Naive thymus-derived CD4-positive, alpha-beta T cell (primary cell): ENCODE measurements at regions of chrX and their contacts with region 1.

Region 1: DNA sequence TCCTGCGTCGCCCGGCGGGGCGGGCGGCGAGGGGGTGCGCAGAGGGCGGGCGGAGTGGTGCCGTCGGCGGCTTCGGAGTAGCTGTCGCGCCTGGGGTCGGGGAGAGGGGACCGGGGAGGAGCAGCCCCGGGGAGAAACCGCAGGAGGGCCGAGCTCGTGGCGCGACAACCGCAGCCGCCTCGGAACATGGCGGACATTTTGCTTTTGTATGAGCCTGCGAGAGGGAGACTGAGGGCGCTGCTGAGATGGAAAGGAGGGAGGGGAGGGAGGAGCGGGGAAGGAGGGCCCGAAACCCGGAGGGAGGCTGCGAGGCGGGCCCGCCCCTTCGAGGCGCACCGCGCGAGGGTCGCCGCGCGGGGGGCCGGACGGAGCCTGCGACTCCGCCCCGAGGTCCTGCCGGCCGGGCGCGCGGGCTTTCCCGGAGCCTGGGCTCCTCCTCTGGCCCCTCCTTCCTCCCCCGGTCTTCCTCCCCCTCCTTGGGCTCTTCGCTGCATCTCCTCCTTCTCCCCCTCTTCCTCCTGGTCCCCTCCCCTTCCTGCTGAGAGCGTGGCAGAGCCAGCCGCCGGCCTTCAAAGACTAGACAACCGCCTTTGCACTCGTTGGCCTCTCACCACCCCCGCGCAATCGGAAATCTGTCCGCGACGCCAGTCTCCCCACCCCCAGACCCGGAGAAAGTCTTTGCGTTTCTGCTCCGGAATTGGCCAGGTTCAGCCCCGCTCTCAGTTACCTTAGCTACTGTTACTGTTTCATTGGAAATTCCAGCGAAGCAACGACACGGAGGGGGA is 1.1 kb downstream of the INTS6L start:
- DNase-seq: peak; percentile 45 to 90 (median 83)
- ATAC-seq: peak; percentile 83
- H3K4me3 ChIP-seq: peak overlapping the region; percentile 62
- H3K4me3 Mint-ChIP-seq: peak overlapping the region; percentile 92 to 100 (median 98)
- H3K27ac ChIP-seq: peak overlapping the region; percentile 90
- H3K27ac Mint-ChIP-seq: peak overlapping the region; percentile 95 to 100 (median 97)
- H3K4me1 ChIP-seq: peaks cover 5 to 12% of the 10 kb centered on the region in 2 donors
- H3K4me1 Mint-ChIP-seq: peaks cover 8 to 49% (median 41%) of the 10 kb centered on the region in 7 donors
- H3K27me3 ChIP-seq: no peaks in the 10 kb centered on the region
- H3K27me3 Mint-ChIP-seq: peaks cover 0 to 3% (median 0%) of the 10 kb centered on the region in 5 donors

Region 2: GRCh38 chrX:134807039-134807731 is 714.4 kb before region 1 on chrX:
- CTCF ChIA-PET with region 1: no interaction called
- POLR2A ChIA-PET with region 1: no interaction called
- intact Hi-C with region 1: loop called in 1 of 2 experiments (anchors 10 kb)
- DNase-seq: peak; percentile 56 to 91 (median 85)
- ATAC-seq: peak; percentile 93
- H3K4me3 ChIP-seq: peak overlapping the region; percentile 79
- H3K4me3 Mint-ChIP-seq: peak overlapping the region; percentile 89 to 99 (median 95)
- H3K27ac ChIP-seq: peak overlapping the region; percentile 94
- H3K27ac Mint-ChIP-seq: peak overlapping the region; percentile 87 to 100 (median 97)
- H3K4me1 ChIP-seq: peaks cover 4% of the 10 kb centered on the region in 2 donors
- H3K4me1 Mint-ChIP-seq: peaks cover 8 to 39% (median 27%) of the 10 kb centered on the region in 7 donors
- H3K27me3 ChIP-seq: no peaks in the 10 kb centered on the region
- H3K27me3 Mint-ChIP-seq: peaks cover 0 to 2% (median 0%) of the 10 kb centered on the region in 5 donors

Region 3: DNA sequence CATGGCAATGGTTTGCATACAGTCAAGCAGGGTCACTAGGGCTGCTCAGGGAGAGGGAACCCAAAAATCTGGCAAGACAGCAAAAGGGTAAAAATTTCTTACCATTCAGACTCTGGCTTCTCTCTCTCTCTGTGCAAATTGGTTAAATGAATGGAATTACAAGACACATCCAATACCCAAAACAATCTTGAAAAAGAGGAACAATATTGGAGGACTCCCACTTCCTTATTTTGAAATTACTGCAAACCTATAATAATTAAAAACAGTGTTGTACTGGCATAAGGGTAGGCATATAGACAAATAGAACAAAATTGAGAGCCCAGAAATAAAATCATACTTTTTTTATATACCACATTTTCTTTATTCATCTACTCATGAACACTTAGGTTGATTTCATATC is 245.6 kb before region 1 on chrX:
- CTCF ChIA-PET with region 1: no interaction called
- POLR2A ChIA-PET with region 1: no interaction called
- intact Hi-C with region 1: no loop called
- DNase-seq: no peak
- ATAC-seq: no peak
- H3K4me3 ChIP-seq: no peak overlapping the region
- H3K4me3 Mint-ChIP-seq: no peak overlapping the region
- H3K27ac ChIP-seq: no peak overlapping the region
- H3K27ac Mint-ChIP-seq: no peak overlapping the region
- H3K4me1 ChIP-seq: no peaks in the 10 kb centered on the region
- H3K4me1 Mint-ChIP-seq: peaks cover 0 to 4% (median 0%) of the 10 kb centered on the region in 7 donors
- H3K27me3 ChIP-seq: no peaks in the 10 kb centered on the region
- H3K27me3 Mint-ChIP-seq: no peaks in the 10 kb centered on the region

Region 4: GRCh38 chrX:135384161-135384836 is 137.3 kb before region 1 on chrX:
- CTCF ChIA-PET with region 1: no interaction called
- POLR2A ChIA-PET with region 1: no interaction called
- intact Hi-C with region 1: loop called in 1 of 2 experiments (anchors 2 kb)
- DNase-seq: peak in 8 of 9 donors; percentile 35 to 70 (median 56)
- ATAC-seq: peak; percentile 97
- H3K4me3 ChIP-seq: peak overlapping the region; percentile 35
- H3K4me3 Mint-ChIP-seq: peak overlapping the region; percentile 46 to 78 (median 64)
- H3K27ac ChIP-seq: no peak overlapping the region
- H3K27ac Mint-ChIP-seq: peak overlapping the region; percentile 17 to 92 (median 72)
- H3K4me1 ChIP-seq: peaks cover 30 to 40% of the 10 kb centered on the region in 2 donors
- H3K4me1 Mint-ChIP-seq: peaks cover 17 to 50% (median 44%) of the 10 kb centered on the region in 7 donors
- H3K27me3 ChIP-seq: no peaks in the 10 kb centered on the region
- H3K27me3 Mint-ChIP-seq: no peaks in the 10 kb centered on the region

Region 5: GRCh38 chrX:135531813-135532212 is 10.2 kb after region 1 on chrX:
- CTCF ChIA-PET with region 1: interaction called, 3 read pairs
- POLR2A ChIA-PET with region 1: interaction called, 15 read pairs
- intact Hi-C with region 1: loop called in 1 of 2 experiments (anchors 1 kb)
- DNase-seq: no peak
- ATAC-seq: no peak
- H3K4me3 ChIP-seq: no peak overlapping the region
- H3K4me3 Mint-ChIP-seq: no peak overlapping the region
- H3K27ac ChIP-seq: no peak overlapping the region
- H3K27ac Mint-ChIP-seq: peak overlapping the region in 5 of 9 donors; percentile 6 to 83 (median 14)
- H3K4me1 ChIP-seq: peaks cover 2 to 12% of the 10 kb centered on the region in 2 donors
- H3K4me1 Mint-ChIP-seq: peaks cover 23 to 86% (median 72%) of the 10 kb centered on the region in 7 donors
- H3K27me3 ChIP-seq: no peaks in the 10 kb centered on the region
- H3K27me3 Mint-ChIP-seq: no peaks in the 10 kb centered on the region

Region 6: DNA sequence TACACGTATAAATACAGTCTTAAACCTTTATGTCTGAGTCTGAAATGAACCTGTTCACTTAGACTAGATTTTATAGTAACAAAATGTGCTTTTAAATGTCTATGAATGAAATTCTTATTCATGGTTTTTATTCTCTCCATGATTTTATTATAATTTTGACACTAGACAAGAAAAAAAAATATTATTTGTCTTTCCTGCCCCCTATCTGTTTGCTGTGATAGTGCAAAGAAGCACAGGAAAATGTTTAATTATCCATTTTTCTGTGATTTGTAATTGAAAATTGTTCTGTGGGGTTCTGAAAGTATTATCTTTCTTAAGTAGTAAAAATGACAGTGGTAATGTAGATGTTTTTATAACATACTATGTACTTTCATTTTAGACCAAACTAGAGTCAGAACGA is 50.8 kb after region 1 on chrX:
- CTCF ChIA-PET with region 1: no interaction called
- POLR2A ChIA-PET with region 1: interaction called, 3 read pairs
- intact Hi-C with region 1: loop called (anchors 2 kb)
- DNase-seq: peak in 4 of 9 donors; percentile 5 to 12 (median 10)
- ATAC-seq: no peak
- H3K4me3 ChIP-seq: no peak overlapping the region
- H3K4me3 Mint-ChIP-seq: no peak overlapping the region
- H3K27ac ChIP-seq: no peak overlapping the region
- H3K27ac Mint-ChIP-seq: no peak overlapping the region
- H3K4me1 ChIP-seq: no peaks in the 10 kb centered on the region
- H3K4me1 Mint-ChIP-seq: peaks cover 0 to 4% (median 0%) of the 10 kb centered on the region in 7 donors
- H3K27me3 ChIP-seq: no peaks in the 10 kb centered on the region
- H3K27me3 Mint-ChIP-seq: no peaks in the 10 kb centered on the region

Region 7: GRCh38 chrX:136147315-136147901 is 625.8 kb after region 1 on chrX and contains the start of gene FHL1:
- CTCF ChIA-PET with region 1: no interaction called
- POLR2A ChIA-PET with region 1: interaction called, 3 read pairs
- intact Hi-C with region 1: loop called in 1 of 2 experiments (anchors 10 kb)
- DNase-seq: peak; percentile 12 to 59 (median 45)
- ATAC-seq: peak; percentile 86
- H3K4me3 ChIP-seq: peak within 1 kb of the TSS; percentile 55
- H3K4me3 Mint-ChIP-seq: peak within 1 kb of the TSS; percentile 82 to 94 (median 89)
- H3K27ac ChIP-seq: peak within 1 kb of the TSS; percentile 56
- H3K27ac Mint-ChIP-seq: peak within 1 kb of the TSS; percentile 73 to 97 (median 91)
- H3K4me1 ChIP-seq: peaks cover 0 to 17% of the 10 kb centered on the region in 2 donors
- H3K4me1 Mint-ChIP-seq: peaks cover 23 to 54% (median 41%) of the 10 kb centered on the region in 7 donors
- H3K27me3 ChIP-seq: no peaks in the 10 kb centered on the region
- H3K27me3 Mint-ChIP-seq: peaks cover 0 to 14% (median 0%) of the 10 kb centered on the region in 5 donors
- total RNA-seq, gene FHL1: 14.9 to 26.4 (median 22.4) TPM

Region 8: GRCh38 chrX:136275553-136275952 is 754.0 kb after region 1 on chrX:
- CTCF ChIA-PET with region 1: no interaction called
- POLR2A ChIA-PET with region 1: no interaction called
- intact Hi-C with region 1: no loop called
- DNase-seq: no peak
- ATAC-seq: no peak
- H3K4me3 ChIP-seq: no peak overlapping the region
- H3K4me3 Mint-ChIP-seq: no peak overlapping the region
- H3K27ac ChIP-seq: no peak overlapping the region
- H3K27ac Mint-ChIP-seq: no peak overlapping the region
- H3K4me1 ChIP-seq: no peaks in the 10 kb centered on the region
- H3K4me1 Mint-ChIP-seq: peaks cover 0 to 9% (median 0%) of the 10 kb centered on the region in 7 donors
- H3K27me3 ChIP-seq: no peaks in the 10 kb centered on the region
- H3K27me3 Mint-ChIP-seq: peaks cover 0 to 4% (median 0%) of the 10 kb centered on the region in 5 donors

Region 9: DNA sequence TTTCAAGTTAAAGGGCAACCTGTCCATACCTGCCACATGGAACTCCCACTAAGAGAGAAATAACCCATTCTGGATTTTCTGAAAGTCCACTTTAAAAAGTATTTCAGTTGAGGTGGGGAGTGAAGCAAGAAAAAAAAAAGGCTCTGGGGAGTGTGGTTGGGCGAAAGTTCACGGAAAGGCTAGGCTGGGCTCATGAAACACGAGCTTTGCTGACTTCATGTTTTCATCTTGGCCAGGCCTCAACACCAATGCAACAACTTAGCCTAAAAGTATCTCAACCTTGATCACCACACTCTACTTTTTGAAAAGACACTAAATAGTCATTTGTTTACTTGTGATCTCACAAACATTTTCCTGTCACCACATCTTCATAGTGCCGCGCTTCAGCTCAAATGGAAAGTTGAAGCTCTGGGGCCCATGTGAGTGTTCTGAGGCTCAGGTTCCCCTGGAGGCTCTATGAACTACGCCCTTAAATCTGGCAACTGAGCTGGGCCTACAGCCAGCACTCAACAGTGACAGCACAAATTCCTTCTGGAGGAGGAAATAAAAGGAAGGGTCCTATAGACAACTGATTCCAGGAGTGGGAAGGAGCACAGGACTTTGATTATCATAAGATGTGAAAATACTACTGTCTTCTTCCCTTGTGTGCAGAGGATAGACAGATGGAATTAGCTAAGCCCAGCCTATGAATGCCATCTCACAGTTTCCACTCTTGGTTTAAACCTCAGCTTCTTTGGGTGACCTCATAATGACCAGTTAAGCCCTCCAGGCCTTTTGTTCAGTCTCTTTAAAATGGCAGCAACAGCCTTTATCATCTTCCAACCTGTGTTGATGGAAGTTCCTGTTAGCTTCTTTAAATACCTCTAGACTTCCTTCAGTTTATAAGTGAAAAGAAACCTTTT is 1131.5 kb after region 1 on chrX:
- CTCF ChIA-PET with region 1: no interaction called
- POLR2A ChIA-PET with region 1: no interaction called
- intact Hi-C with region 1: loop called in 1 of 2 experiments (anchors 10 kb)
- DNase-seq: peak in 2 of 9 donors; percentile 39 to 55
- ATAC-seq: peak; percentile 42
- H3K4me3 ChIP-seq: peak overlapping the region; percentile 94
- H3K4me3 Mint-ChIP-seq: peak overlapping the region; percentile 79 to 99 (median 96)
- H3K27ac ChIP-seq: peak overlapping the region; percentile 79
- H3K27ac Mint-ChIP-seq: peak overlapping the region; percentile 85 to 99 (median 95)
- H3K4me1 ChIP-seq: peaks cover 14 to 30% of the 10 kb centered on the region in 2 donors
- H3K4me1 Mint-ChIP-seq: peaks cover 12 to 57% (median 42%) of the 10 kb centered on the region in 7 donors
- H3K27me3 ChIP-seq: peaks cover 0 to 3% of the 10 kb centered on the region in 2 donors
- H3K27me3 Mint-ChIP-seq: no peaks in the 10 kb centered on the region